HCT116 (cell line): ENCODE measurements at regions of chr15 and their contacts with region 1.

Region 1: DNA sequence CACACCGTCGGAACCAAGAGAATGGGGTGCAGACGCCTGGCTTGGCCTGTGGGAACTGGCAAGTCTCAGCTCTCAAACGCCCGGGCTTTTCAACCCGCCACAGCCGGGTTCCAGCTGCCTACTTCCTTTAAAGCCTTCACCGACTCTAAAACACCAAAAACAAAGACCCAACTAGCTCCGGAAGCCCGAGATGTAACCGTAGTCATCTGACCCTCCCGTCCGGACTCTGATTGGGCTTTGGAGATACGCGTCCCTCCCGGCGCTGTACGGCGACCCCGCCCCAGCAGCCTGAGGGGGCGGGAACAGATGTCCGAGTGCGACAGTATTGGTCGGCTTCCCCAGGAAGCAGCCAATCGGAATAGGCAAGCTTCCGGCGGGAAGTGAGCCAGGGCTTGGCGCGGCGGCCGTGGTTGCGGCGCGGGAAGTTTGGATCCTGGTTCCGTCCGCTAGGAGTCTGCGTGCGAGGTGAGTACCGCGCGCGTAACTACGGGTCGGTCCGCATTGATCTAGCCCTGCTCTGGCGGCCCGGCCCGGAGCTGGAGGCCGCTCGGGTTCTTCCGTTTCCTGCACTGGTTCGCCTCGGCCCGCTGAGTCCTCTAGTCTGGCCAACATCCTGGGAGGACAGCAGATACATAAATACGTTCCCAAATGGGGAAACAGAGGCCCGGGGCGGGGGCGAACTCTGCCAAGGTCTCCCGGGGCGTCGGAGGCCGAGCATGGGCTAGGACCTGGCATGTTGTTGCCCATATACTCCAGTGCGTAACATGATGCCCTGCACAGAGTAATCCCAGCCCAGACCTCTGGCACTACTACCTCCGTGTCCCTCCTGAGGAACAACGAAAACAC is at the start of gene BLM:
- DNase-seq: peak; percentile 92
- ATAC-seq: peak; percentile 99
- H3K4me3 ChIP-seq: peak within 1 kb of the TSS; percentile 75 to 80
- H3K27ac ChIP-seq: peak within 1 kb of the TSS; percentile 74
- H3K4me1 ChIP-seq: peaks cover 11 to 19% of the 10 kb centered on the region in 2 experiments
- H3K27me3 ChIP-seq: no peaks in the 10 kb centered on the region
- CTCF ChIP-seq: peak in 1 of 3 experiments; percentile 20; a peak in 1 of 6 replicates
- POLR2A ChIP-seq: peak; percentile 58
- RAD21 ChIP-seq: no peak
- total RNA-seq, gene BLM: 24.6 TPM

Region 2: DNA sequence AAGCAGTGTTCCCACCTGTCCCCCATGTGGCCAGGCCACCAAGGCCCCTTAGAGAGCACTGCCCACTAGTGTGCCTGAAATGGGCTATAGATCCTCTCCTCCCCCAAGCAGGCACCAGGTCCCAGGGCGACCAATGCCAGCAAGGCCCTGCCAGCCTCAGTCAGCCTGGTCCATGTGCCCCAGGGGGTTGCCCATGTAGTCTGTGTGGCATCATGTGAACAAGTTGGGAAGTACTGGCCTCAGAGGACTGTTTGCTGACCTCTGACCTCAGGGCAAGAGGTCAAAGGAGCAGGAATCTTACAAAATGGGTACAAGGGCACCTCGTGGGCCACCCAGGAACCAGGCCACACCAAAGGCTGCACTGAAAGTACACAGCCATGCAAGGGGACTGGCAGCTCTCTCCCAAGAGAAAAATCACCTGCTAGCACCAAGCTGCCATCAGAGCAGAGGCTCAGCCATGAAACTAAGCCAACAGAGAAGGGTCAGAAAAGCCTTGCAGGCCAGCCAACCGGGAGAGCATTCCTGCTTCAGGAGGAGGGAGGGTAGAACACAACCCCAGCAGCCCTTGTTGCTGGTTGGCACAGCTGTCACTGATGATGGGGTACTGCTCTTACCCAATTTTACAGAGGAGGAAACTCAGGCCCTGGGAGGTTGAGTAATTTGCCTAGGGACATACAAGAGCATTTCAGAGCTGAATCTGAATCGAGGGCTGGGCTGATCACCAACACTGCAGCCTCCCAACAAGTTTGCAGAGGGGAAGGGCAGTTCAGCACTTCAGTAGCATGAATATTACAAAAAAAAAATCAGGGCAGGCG is 146.0 kb after region 1 on chr15:
- CTCF ChIA-PET with region 1: no interaction called
- POLR2A ChIA-PET with region 1: no interaction called
- RAD21 ChIA-PET with region 1: interaction called in 1 of 2 experiments, 3 read pairs
- intact Hi-C with region 1: loop called (anchors 5 kb)
- DNase-seq: no peak
- ATAC-seq: no peak
- H3K4me3 ChIP-seq: no peak overlapping the region
- H3K27ac ChIP-seq: no peak overlapping the region
- H3K4me1 ChIP-seq: peaks cover 26 to 55% of the 10 kb centered on the region in 2 experiments
- H3K27me3 ChIP-seq: no peaks in the 10 kb centered on the region
- CTCF ChIP-seq: no peak
- POLR2A ChIP-seq: no peak
- RAD21 ChIP-seq: no peak

Region 3: GRCh38 chr15:90970274-90970673 is 253.1 kb after region 1 on chr15:
- CTCF ChIA-PET with region 1: no interaction called
- POLR2A ChIA-PET with region 1: no interaction called
- RAD21 ChIA-PET with region 1: no interaction called
- intact Hi-C with region 1: no loop called
- DNase-seq: no peak
- ATAC-seq: no peak
- H3K4me3 ChIP-seq: no peak overlapping the region
- H3K27ac ChIP-seq: no peak overlapping the region
- H3K4me1 ChIP-seq: no peaks in the 10 kb centered on the region
- H3K27me3 ChIP-seq: no peaks in the 10 kb centered on the region
- CTCF ChIP-seq: no peak
- POLR2A ChIP-seq: no peak
- RAD21 ChIP-seq: no peak